Activated CD4-positive, alpha-beta memory T cell treated with anti-CD3 and anti-CD28 coated beads for 36 hours (primary cell): ENCODE measurements at regions of chr1 and their contacts with region 1.

Region 1: GRCh38 chr1:192639607-192640368 is 3.8 kb downstream of the RGS13 start:
- DNase-seq: no peak
- H3K4me3 Mint-ChIP-seq: no peak overlapping the region
- H3K27ac Mint-ChIP-seq: no peak overlapping the region
- H3K4me1 Mint-ChIP-seq: peaks cover 17% of the 10 kb centered on the region
- H3K27me3 Mint-ChIP-seq: peaks cover 5% of the 10 kb centered on the region

Region 2: DNA sequence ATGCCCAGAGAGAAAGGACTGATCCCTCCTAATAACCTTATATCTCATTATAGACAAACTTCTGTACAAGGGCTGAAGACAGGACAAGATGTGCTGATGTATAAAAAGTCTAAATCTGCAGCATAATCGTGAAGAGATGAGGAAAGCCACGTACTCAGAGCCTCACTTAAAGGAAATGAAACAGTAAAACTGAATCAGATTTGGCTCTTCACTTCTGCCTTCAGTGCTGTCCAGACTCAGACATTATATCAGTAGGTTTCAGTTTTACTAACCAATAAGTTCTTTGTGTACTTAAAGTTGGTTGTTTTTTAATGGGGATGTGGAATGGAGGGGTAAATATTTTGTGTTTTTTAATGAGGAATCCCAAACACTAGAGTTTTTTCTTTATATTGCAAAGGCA is 109.5 kb before region 1 on chr1:
- CTCF ChIA-PET with region 1: no interaction called
- POLR2A ChIA-PET with region 1: no interaction called
- intact Hi-C with region 1: loop called (anchors 1 kb)
- DNase-seq: no peak
- H3K4me3 Mint-ChIP-seq: no peak overlapping the region
- H3K27ac Mint-ChIP-seq: peak overlapping the region; percentile 47
- H3K4me1 Mint-ChIP-seq: peaks cover 27% of the 10 kb centered on the region
- H3K27me3 Mint-ChIP-seq: peaks cover 3% of the 10 kb centered on the region

Region 3: GRCh38 chr1:192601567-192601966 is 38.2 kb before region 1 on chr1:
- CTCF ChIA-PET with region 1: no interaction called
- POLR2A ChIA-PET with region 1: no interaction called
- intact Hi-C with region 1: loop called (anchors 2 kb)
- DNase-seq: no peak
- H3K4me3 Mint-ChIP-seq: no peak overlapping the region
- H3K27ac Mint-ChIP-seq: no peak overlapping the region
- H3K4me1 Mint-ChIP-seq: peaks cover 26% of the 10 kb centered on the region
- H3K27me3 Mint-ChIP-seq: no peaks in the 10 kb centered on the region

Region 4: GRCh38 chr1:192654591-192655251 is 14.9 kb after region 1 on chr1:
- CTCF ChIA-PET with region 1: interaction called, 4 read pairs
- POLR2A ChIA-PET with region 1: interaction called, 7 read pairs
- intact Hi-C with region 1: loop called (anchors 1 kb)
- DNase-seq: peak; percentile 33
- H3K4me3 Mint-ChIP-seq: no peak overlapping the region
- H3K27ac Mint-ChIP-seq: peak overlapping the region; percentile 43
- H3K4me1 Mint-ChIP-seq: peaks cover 13% of the 10 kb centered on the region
- H3K27me3 Mint-ChIP-seq: peaks cover 14% of the 10 kb centered on the region

Region 5: GRCh38 chr1:192700834-192701271 is 61.1 kb after region 1 on chr1:
- CTCF ChIA-PET with region 1: no interaction called
- POLR2A ChIA-PET with region 1: no interaction called
- intact Hi-C with region 1: loop called (anchors 1 kb)
- DNase-seq: no peak
- H3K4me3 Mint-ChIP-seq: no peak overlapping the region
- H3K27ac Mint-ChIP-seq: no peak overlapping the region
- H3K4me1 Mint-ChIP-seq: peaks cover 23% of the 10 kb centered on the region
- H3K27me3 Mint-ChIP-seq: no peaks in the 10 kb centered on the region

Region 6: GRCh38 chr1:192936313-192937018 is 296.7 kb after region 1 on chr1:
- CTCF ChIA-PET with region 1: no interaction called
- POLR2A ChIA-PET with region 1: no interaction called
- intact Hi-C with region 1: loop called (anchors 1 kb)
- DNase-seq: no peak
- H3K4me3 Mint-ChIP-seq: no peak overlapping the region
- H3K27ac Mint-ChIP-seq: peak overlapping the region; percentile 36
- H3K4me1 Mint-ChIP-seq: peaks cover 20% of the 10 kb centered on the region
- H3K27me3 Mint-ChIP-seq: no peaks in the 10 kb centered on the region

Region 7: DNA sequence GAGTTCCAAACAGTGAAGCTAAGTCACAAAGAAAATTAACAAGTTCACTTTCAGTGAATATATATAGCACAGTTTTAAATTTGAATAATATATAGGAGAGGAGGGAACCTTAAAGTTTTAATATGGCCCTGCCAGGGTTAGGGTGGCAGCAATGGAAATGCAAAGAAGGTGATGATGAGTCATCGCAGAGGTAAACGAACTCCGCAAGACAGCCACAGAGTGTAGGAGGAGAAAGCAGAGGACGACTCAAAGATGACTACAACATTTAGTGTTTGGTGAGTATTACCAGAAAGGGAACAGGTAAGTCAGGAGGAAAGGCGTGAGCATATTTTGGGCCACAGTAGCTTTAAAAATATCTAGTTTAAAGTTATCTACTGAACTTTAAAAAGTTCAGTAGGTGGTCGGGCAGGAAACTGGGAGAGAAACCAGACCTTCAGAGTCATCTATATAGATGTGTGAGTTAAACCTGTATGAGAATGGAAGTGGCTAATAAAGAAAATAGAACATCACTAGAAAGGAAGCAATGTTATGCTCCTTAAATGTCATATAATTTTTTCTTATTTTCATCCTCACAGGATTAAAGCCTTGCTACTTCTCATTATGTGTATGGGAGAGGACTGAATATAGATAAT is 343.7 kb after region 1 on chr1:
- CTCF ChIA-PET with region 1: no interaction called
- POLR2A ChIA-PET with region 1: no interaction called
- intact Hi-C with region 1: loop called (anchors 1 kb)
- DNase-seq: peak; percentile 68
- H3K4me3 Mint-ChIP-seq: no peak overlapping the region
- H3K27ac Mint-ChIP-seq: peak overlapping the region; percentile 82
- H3K4me1 Mint-ChIP-seq: peaks cover 45% of the 10 kb centered on the region
- H3K27me3 Mint-ChIP-seq: no peaks in the 10 kb centered on the region